Right lobe of liver (tissue), 6 donors: ENCODE measurements at regions of chr1 and their contacts with region 1.

Region 1: DNA sequence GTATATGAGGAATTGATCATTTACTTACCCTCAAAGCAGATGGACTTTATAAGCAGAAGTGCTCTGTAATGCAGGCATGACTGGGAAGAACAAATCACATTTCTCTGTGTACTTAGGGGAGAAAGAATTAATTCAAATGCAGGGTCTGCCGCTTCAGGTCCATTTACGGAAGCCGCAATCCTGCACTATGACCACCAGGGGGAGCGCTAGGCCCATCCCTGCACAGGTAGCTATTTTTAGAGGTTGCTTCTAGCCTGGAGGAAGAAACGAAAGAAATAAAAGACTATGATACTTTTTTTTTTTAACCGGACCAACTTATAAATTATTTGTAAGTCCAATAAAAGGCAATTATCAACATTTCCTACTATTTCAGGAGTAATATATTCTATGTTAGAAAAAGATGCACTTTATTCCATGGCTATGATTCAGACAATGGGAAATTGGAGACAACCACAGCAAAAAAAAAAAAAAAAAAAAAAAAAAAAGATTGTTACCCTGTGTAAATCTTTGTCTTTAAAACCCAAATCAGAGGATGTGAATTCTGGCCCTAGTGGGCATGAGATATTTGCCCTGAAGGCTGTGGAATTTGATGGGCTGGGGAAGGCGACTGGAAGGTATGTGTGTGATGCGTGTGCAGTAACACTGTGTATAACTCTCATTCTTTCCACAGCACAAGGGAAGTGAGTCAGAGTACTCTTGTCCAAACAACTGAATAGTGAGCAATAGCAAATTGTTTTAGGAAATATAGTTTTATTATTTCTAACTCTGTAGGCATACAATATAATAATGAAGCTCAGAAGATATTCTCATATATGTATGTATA is 12.9 kb upstream of the FYB2 start:
- DNase-seq: peak; percentile 57 to 74 (median 72)
- ATAC-seq: peak; percentile 79 to 84 (median 81)
- H3K4me3 ChIP-seq: peak overlapping the region in 1 of 3 donors; percentile 17
- H3K27ac ChIP-seq: peak overlapping the region in 2 of 3 donors; percentile 31 to 56
- H3K4me1 ChIP-seq: peaks cover 0 to 22% (median 5%) of the 10 kb centered on the region in 4 donors
- H3K27me3 ChIP-seq: no peaks in the 10 kb centered on the region
- CTCF ChIP-seq: peak; percentile 94 to 98 (median 98)
- POLR2A ChIP-seq: peak; percentile 47

Region 2: DNA sequence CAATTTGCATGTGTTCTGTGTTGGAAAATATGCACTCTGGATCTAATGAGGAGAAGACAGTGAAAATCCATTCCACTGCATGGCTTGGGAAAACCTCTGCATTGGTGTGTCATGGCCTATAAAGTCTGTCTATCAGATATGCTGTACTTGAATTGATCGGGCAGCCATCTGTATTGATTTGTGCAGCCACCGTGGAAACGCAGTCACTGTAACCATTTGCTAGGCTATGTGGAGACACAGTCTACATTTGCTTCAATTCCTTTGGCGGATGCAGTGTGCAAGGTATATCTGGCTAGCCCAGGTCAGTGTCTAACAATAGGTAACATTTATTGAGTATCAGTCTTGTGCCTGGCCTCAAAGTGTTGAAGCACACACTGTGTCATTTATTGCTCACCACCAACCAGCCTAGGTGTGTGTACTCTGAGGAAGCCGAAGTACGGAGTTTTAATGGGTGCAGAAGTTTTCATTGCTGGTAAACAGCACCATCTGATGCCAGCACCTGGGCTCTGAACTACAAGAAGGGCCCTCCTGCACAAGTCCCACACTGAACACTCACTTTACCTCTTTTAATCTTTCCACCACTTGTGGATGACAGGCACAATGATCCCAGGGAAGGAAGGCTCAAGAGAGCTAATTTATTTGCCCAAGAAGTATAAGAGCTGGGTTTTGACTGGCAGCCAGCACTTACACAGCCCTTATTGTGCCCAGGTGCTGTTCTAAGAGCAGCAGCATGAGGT is 508.4 kb after region 1 on chr1:
- intact Hi-C with region 1: loop called in 1 of 2 experiments (anchors 5 kb)
- DNase-seq: peak in 1 of 3 donors; percentile 68
- ATAC-seq: peak; percentile 97 to 99 (median 98)
- H3K4me3 ChIP-seq: no peak overlapping the region
- H3K27ac ChIP-seq: no peak overlapping the region
- H3K4me1 ChIP-seq: peaks cover 0 to 5% (median 0%) of the 10 kb centered on the region in 4 donors
- H3K27me3 ChIP-seq: no peaks in the 10 kb centered on the region
- CTCF ChIP-seq: peak; percentile 46 to 60 (median 49)
- POLR2A ChIP-seq: no peak